WTC11 (cell line): ENCODE measurements at regions of chr12 and their contacts with region 1.

Region 1: DNA sequence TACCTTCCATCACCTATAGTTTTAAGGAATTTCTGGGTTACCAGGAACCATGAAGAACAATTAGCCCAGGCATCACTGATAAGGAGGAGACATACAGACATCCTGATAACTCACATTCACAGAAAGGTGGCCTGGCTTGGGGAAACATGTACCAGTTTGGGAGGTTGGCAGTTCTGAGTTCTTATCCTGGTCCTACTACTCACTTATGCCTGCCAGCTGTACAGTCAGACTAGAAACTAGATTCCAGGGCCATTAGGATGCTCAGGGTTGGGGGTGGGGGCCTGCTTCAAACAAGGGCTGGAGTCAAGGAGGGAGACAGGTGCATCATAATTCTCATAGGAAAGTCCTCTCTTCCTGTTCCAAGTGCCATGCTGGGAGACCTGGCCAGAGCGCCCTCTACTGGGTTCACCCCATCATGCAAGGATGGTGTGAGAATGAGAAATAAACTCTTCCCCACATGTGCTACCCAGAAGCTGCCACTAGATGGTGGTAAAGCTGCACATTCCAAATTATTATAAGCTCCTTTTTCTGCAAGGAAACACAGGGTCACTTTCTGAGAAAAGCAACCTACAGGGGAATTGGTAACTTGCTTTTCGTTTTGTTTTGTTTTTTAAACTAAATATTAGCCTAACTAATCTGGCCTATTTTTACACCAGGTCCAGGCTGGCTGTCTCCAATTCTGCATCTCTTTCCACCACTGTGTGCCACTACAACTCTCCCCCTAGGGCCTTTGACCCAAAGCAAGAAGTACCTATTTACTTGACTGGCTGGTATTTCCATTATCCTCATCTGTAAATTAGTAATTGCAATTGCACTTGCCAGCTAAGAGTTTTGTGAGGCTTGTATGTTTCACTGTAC is 14.5 kb downstream of the OAS2 start:
- DNase-seq: peak; percentile 83
- ATAC-seq: peak; percentile 87
- H3K4me3 Mint-ChIP-seq: no peak overlapping the region
- H3K27ac Mint-ChIP-seq: no peak overlapping the region
- H3K4me1 Mint-ChIP-seq: peaks cover 16% of the 10 kb centered on the region
- H3K27me3 Mint-ChIP-seq: peaks cover 8% of the 10 kb centered on the region
- CTCF ChIP-seq: peak; percentile 83

Region 2: GRCh38 chr12:112777387-112778310 is 215.1 kb before region 1 on chr12:
- CTCF ChIA-PET with region 1: interaction called, 10 read pairs
- POLR2A ChIA-PET with region 1: no interaction called
- DNase-seq: no peak
- ATAC-seq: peak; percentile 92
- H3K4me3 Mint-ChIP-seq: peak overlapping the region; percentile 17; the same call in 1 of the 2 replicates
- H3K27ac Mint-ChIP-seq: peak overlapping the region; percentile 83
- H3K4me1 Mint-ChIP-seq: peaks cover 42% of the 10 kb centered on the region
- H3K27me3 Mint-ChIP-seq: peaks cover 32% of the 10 kb centered on the region
- CTCF ChIP-seq: no peak

Region 3: DNA sequence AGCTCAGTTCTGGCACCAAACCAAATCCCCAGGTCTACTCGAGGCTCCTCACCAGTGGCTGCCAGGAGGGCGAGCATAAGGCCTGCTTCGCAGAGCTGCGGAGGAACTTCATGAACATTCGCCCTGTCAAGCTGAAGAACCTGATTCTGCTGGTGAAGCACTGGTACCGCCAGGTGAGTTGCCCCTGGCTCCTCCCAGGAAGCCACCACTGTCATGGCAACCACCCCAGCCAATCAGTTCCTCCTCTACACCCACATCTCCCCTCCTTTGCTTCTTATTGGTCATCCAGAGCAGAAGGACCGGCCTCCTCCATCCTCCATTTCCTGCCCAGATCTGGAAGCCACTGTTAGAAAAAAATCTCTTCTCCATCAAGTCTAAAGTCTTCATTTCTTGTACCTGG is 31.7 kb before region 1 on chr12:
- CTCF ChIA-PET with region 1: interaction called, 21 read pairs
- POLR2A ChIA-PET with region 1: no interaction called
- DNase-seq: no peak
- ATAC-seq: no peak; the same call in 1 of the 2 replicates
- H3K4me3 Mint-ChIP-seq: no peak overlapping the region
- H3K27ac Mint-ChIP-seq: no peak overlapping the region
- H3K4me1 Mint-ChIP-seq: no peaks in the 10 kb centered on the region
- H3K27me3 Mint-ChIP-seq: peaks cover 37% of the 10 kb centered on the region
- CTCF ChIP-seq: no peak

Region 4: DNA sequence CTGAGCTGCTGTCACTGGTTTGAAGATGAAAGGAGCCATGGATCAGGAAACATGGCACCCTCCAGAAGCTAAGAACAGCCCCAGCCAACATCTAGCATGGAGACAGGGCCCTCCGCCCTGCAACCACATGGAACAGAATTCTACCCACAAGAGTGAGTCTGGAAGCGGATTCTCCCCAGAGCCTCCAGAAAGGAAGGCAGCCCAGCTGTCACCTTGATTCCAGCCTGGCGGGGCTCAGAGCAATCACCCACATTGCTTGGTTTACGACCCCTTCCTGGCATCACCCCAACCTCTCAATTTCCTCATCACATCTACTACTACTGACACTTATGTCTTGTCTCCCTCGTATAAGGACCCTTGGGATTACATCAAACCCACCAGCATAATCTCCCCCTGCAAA is 24.0 kb after region 1 on chr12:
- CTCF ChIA-PET with region 1: interaction called, 22 read pairs
- POLR2A ChIA-PET with region 1: no interaction called
- DNase-seq: no peak
- ATAC-seq: no peak
- H3K4me3 Mint-ChIP-seq: no peak overlapping the region
- H3K27ac Mint-ChIP-seq: no peak overlapping the region
- H3K4me1 Mint-ChIP-seq: no peaks in the 10 kb centered on the region
- H3K27me3 Mint-ChIP-seq: peaks cover 9% of the 10 kb centered on the region
- CTCF ChIP-seq: no peak

Region 5: DNA sequence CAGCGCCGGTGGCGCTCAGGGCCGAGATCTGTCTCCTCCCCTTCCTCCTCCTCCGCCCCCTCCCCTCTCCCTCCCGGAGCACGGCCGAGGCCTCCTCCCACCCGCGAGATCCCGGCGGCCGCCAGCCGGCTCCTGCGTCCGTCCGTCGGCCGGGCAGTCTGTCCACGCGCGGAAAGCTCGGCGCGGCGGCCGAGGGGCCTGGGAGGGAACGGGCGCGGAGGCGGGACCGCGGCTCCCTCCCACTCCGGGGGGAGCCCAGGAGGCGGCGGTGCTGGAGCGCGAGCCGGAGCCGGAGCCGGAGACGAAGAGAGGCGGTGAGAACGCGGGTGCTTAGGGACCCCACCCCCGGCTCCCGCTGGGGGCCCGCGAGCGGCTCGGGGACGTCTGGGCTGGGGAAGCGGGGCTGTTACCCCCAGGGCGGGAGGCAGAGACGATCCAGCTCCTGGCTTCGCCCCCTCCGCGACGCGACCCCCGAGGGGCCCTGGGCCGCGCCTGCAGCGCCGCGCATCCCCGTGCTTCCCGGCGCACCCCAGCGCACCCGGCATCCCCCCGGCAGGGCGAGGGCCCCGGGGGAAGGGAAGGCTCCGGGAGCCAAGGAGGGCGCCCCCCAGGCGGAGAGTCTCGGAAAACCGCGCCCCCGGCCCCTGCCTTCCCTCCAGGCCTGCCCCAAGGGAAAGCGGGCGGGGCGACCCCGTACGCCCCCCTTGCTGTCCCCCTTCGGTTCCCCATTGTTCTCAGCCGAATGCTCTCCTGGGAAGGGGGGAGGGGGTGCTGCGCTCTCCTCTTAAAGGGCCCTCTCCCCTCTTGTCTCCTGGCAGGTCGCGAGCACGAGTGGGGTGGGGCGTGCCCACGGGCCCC is 64.1 kb after region 1 on chr12 and contains the start of gene DTX1:
- CTCF ChIA-PET with region 1: interaction called, 13 read pairs
- POLR2A ChIA-PET with region 1: no interaction called
- DNase-seq: no peak
- ATAC-seq: peak; percentile 11
- H3K4me3 Mint-ChIP-seq: peak within 1 kb of the TSS; percentile 64
- H3K27ac Mint-ChIP-seq: no peak within 1 kb of the TSS
- H3K4me1 Mint-ChIP-seq: 0 out of 2 replicates have a peak, but pooled peaks cover 2% of the 10 kb centered on the region
- H3K27me3 Mint-ChIP-seq: peaks cover 39% of the 10 kb centered on the region
- CTCF ChIP-seq: no peak
- total RNA-seq, gene DTX1: 6.2 to 9.2 TPM (median 7.7 TPM) in 3 replicates

Region 6: DNA sequence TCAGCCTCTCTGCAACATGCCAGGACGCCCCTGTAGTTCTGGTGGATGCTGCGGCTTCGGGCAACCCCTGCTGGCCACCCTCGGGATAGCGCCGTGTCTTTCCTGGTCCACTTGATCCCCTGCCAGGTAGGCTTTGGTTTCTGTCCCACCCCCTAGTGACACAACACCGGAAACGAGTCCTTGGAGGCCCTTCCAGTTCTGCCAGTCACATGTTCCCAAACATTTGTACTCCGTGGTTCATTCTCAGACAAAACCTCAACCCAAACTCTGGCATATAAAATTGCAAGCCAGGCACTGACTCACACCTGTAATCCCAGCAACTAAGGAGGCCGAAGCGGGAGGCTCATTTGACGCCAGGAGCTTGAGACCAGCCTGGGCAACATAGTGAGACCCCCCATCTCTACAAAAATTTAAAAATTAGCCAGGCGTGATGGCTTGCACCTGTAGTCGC is 105.7 kb after region 1 on chr12:
- CTCF ChIA-PET with region 1: interaction called, 37 read pairs
- POLR2A ChIA-PET with region 1: no interaction called
- DNase-seq: peak; percentile 91
- ATAC-seq: peak; percentile 91
- H3K4me3 Mint-ChIP-seq: no peak overlapping the region
- H3K27ac Mint-ChIP-seq: peak overlapping the region; percentile 95
- H3K4me1 Mint-ChIP-seq: peaks cover 9% of the 10 kb centered on the region
- H3K27me3 Mint-ChIP-seq: no peaks in the 10 kb centered on the region
- CTCF ChIP-seq: peak; percentile 84; the same call in 1 of the 2 replicates

Region 7: GRCh38 chr12:113152835-113153814 is 160.4 kb after region 1 on chr12:
- CTCF ChIA-PET with region 1: interaction called, 21 read pairs
- POLR2A ChIA-PET with region 1: no interaction called
- DNase-seq: peak; percentile 72
- ATAC-seq: peak; percentile 49
- H3K4me3 Mint-ChIP-seq: peak overlapping the region; percentile 67
- H3K27ac Mint-ChIP-seq: no peak overlapping the region
- H3K4me1 Mint-ChIP-seq: peaks cover 21% of the 10 kb centered on the region
- H3K27me3 Mint-ChIP-seq: peaks cover 58% of the 10 kb centered on the region
- CTCF ChIP-seq: no peak